Sigmoid colon (tissue), 7 donors: ENCODE measurements at regions of chr12 and their contacts with region 1.

Region 1: DNA sequence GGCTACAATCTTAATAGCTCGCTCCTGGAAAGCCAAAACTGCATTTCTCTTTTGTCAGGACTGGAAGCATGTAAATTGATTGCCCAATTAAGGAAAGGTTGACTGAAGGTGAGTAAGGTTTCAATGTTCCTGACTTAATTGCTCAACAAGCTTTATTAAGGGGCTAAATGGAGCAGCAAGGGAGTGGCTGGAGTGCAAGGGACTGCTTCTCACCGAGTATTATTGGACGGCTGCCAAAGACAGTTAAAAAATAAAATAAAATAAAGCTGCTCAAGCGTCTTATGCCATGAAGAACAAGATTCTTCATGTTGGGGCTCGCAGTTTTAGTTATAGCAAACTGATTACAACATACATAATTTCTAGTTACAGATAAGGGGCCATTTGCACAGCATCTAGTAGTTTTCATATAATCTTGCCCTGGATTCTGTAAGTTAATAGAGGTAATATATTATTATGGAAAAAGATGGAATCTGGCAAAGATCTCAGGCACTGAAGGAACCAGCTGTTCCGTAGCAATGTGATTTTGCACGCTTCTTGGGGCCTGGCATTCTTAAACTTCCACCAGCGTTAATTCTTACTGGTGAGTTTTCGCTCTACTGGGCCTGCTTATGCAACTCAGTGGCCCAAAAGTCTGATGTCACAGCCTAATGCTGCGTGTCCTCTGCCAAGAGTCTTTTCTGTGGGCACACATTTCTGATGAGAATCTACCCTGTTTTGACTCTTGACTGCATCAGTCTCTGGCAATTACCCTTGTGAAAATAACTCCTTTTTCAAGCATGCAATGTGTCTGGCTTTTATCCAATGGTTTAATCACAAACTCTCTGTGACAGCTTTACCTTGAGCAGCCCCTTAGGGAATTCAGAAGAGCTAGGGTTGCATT is 108.5 kb downstream of the SLC38A1 start:
- DNase-seq: peak; percentile 70
- H3K4me3 ChIP-seq: peak overlapping the region in 1 of 4 donors; percentile 2
- H3K27ac ChIP-seq: peak overlapping the region; percentile 69 to 84 (median 77)
- H3K4me1 ChIP-seq: peaks cover 0 to 51% (median 47%) of the 10 kb centered on the region in 4 donors
- H3K27me3 ChIP-seq: no peaks in the 10 kb centered on the region
- CTCF ChIP-seq: no peak
- EP300 ChIP-seq: peak in 3 of 4 donors; percentile 11 to 49 (median 33)
- POLR2A ChIP-seq: no peak

Region 2: DNA sequence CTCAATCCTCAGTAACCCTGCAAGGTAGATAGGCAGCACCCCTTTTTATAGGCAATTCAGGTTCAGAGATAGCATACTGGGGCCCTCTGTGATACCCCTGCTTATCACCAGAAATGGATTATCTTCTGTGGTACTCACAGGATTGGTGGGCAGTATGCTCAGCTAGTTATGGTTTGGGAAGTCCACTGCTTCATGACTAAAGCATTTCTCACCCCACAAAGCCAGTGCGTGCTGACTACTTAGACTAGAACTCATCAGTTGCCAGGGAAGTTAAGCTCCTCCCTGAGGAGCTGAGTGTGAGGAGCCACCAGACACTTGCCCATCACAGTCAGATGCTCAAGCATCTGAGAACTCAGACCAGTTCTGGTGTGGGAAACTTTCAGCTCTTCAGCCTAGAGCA is 246.3 kb before region 1 on chr12:
- intact Hi-C with region 1: no loop called
- DNase-seq: no peak
- H3K4me3 ChIP-seq: no peak overlapping the region
- H3K27ac ChIP-seq: no peak overlapping the region
- H3K4me1 ChIP-seq: peaks cover 0 to 13% (median 2%) of the 10 kb centered on the region in 4 donors
- H3K27me3 ChIP-seq: no peaks in the 10 kb centered on the region
- CTCF ChIP-seq: no peak
- EP300 ChIP-seq: no peak
- POLR2A ChIP-seq: no peak

Region 3: DNA sequence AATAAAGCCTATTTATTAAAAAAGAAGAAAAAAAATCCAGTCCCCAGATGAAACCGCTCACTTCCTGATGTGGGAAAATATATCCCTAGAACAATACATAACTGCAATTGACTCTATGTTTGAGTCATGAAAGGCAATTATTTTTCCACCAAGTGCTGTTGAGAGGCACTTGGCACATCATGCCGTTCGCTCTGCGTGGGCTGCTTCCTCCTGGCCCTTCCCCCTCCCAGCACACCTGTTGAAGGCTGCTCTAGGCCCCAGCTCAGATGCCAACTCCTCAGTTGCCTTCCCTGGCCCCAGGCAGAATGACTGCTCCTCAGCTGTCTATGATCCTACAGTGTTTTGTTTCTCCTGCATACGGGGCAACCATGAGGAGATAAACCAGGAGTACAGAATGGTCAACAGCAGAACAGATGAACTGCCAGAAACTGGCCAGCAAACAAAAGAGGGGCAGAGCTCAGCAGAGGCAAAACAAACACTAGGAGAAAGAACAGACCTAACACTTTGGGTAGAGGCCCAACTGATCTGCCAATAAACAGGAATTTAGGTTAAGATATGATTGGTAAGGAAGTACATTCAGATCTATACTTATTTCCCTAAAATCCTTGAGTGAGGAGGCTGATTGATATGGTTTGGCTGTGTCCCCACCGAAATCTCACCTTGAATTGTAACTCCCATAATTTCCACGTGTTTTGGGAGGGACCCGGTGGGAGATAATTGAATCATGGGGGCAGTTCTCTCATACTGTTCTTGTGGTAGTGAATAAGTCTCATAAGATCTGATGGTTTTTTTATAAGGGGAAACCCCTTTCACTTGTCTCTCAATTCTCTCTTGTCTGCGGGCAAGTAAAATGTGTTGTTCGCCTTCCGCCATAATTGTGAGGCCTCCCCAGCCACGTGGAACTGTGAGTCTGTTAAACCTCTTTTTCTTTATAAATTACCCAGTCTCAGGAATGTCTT is 49.9 kb after region 1 on chr12:
- intact Hi-C with region 1: loop called (anchors 5 kb)
- DNase-seq: peak; percentile 72
- H3K4me3 ChIP-seq: no peak overlapping the region
- H3K27ac ChIP-seq: peak overlapping the region; percentile 73 to 79 (median 76)
- H3K4me1 ChIP-seq: peaks cover 0 to 100% (median 77%) of the 10 kb centered on the region in 4 donors
- H3K27me3 ChIP-seq: no peaks in the 10 kb centered on the region
- CTCF ChIP-seq: no peak
- EP300 ChIP-seq: peak in 1 of 4 donors; percentile 8
- POLR2A ChIP-seq: no peak